ENCODE measurements at regions of chr16 and their contacts with region 1.

Region 1: DNA sequence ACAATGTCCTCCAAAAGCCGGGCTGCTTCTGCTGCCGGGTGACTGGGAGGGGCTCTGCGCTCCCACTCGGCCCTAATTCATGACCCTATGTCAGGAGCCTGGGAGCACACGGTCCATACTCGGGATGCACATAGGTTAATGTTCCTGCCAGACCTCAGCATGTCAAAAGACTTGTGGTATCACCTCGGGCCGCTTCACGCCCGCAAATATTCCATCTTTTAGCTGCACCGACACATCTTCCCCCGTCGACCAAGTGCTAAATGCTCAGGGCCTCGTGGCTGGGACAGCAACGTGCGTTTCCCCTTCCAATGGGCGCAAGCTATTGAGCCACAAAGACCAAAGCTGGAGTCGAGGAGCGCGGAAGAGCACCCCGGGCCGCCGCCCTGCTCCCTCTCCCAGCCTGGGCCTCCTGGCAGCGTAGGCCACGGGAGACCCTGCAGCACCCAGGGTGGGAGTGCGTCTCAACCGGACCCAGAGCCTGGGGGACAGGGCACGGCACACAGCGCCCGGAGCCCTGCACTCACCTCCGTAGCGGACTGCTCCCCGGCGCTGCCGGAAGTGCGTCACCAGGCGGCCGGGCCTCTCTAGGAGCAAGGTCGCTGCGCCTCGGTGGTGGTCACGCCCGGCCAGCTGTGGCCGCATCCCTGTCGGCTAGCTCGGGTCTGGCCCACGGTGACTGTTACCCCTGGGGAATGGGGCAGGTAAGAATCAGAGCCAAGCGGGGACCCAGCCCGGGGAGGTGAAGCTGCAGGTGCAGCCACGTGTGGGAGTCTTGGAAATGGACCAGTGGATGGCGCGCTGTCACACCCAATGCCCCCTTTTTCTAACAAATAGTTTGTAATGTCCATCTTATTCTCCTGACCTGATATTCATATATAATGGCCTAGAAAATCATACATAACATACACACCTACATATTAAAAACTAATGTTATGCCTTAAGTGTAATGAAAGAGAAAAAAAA is at the start of gene ZNF23:
- DNase-seq: peak; percentile 64
- ATAC-seq: peak; percentile 99
- H3K4me3 ChIP-seq: peak within 1 kb of the TSS; percentile 73 to 90 (median 89)
- H3K27ac ChIP-seq: peak within 1 kb of the TSS; percentile 64
- H3K4me1 ChIP-seq: peaks cover 25% of the 10 kb centered on the region
- H3K27me3 ChIP-seq: no peaks in the 10 kb centered on the region; a peak in 1 of 5 replicates
- CTCF ChIP-seq: peak; percentile 57
- EP300 ChIP-seq: 0 out of 4 replicates have a peak, but pooled peaks have one; percentile 24 to 56
- POLR2A ChIP-seq: peak; percentile 96 to 99
- RAD21 ChIP-seq: peak; percentile 71
- total RNA-seq, gene ZNF23: 12.2 and 14.0 TPM in 2 replicates

Region 2: GRCh38 chr16:71426072-71426879 is 35.7 kb before region 1 on chr16:
- CTCF ChIA-PET with region 1: no interaction called
- POLR2A ChIA-PET with region 1: interaction called, 13 read pairs
- in situ Hi-C with region 1: no loop called
- intact Hi-C with region 1: no loop called
- DNase-seq: peak; percentile 99
- ATAC-seq: peak; percentile 93
- H3K4me3 ChIP-seq: peak overlapping the region; percentile 57 to 80 (median 59)
- H3K27ac ChIP-seq: peak overlapping the region; percentile 41
- H3K4me1 ChIP-seq: peaks cover 30% of the 10 kb centered on the region
- H3K27me3 ChIP-seq: peaks cover 4 to 32% of the 10 kb centered on the region in 2 experiments
- CTCF ChIP-seq: peak; percentile 44
- EP300 ChIP-seq: peak; percentile 9 to 43; a peak in 1 of 4 replicates
- POLR2A ChIP-seq: no peak
- RAD21 ChIP-seq: no peak; the same call in 1 of the 2 replicates

Region 3: GRCh38 chr16:71484006-71484893 is 22.3 kb after region 1 on chr16:
- CTCF ChIA-PET with region 1: interaction called, 3 read pairs
- POLR2A ChIA-PET with region 1: interaction called, 58 read pairs
- in situ Hi-C with region 1: no loop called
- intact Hi-C with region 1: loop called (anchors 1 kb)
- DNase-seq: peak; percentile 91
- ATAC-seq: peak; percentile 93
- H3K4me3 ChIP-seq: peak overlapping the region; percentile 81 to 95 (median 88)
- H3K27ac ChIP-seq: peak overlapping the region; percentile 83
- H3K4me1 ChIP-seq: peaks cover 24% of the 10 kb centered on the region
- H3K27me3 ChIP-seq: peaks cover 0 to 4% of the 10 kb centered on the region in 2 experiments; a peak in 2 of 5 replicates
- CTCF ChIP-seq: no peak; the same call in 1 of the 2 replicates
- EP300 ChIP-seq: no peak
- POLR2A ChIP-seq: peak; percentile 85 to 86
- RAD21 ChIP-seq: peak; percentile 46; the same call in 1 of the 2 replicates

Region 4: GRCh38 chr16:72124761-72125634 is 663.0 kb after region 1 on chr16:
- CTCF ChIA-PET with region 1: no interaction called
- POLR2A ChIA-PET with region 1: no interaction called
- in situ Hi-C with region 1: no loop called
- intact Hi-C with region 1: no loop called
- DNase-seq: peak; percentile 67
- ATAC-seq: peak; percentile 90
- H3K4me3 ChIP-seq: 0 out of 6 replicates have a peak overlapping the region, but pooled peaks of 1 of the 3 experiments have one; percentile 6
- H3K27ac ChIP-seq: peak overlapping the region; percentile 53
- H3K4me1 ChIP-seq: peaks cover 26% of the 10 kb centered on the region
- H3K27me3 ChIP-seq: no peaks in the 10 kb centered on the region
- CTCF ChIP-seq: peak; percentile 95
- EP300 ChIP-seq: peak in 1 of 2 experiments; percentile 17; a peak in 1 of 4 replicates
- POLR2A ChIP-seq: no peak
- RAD21 ChIP-seq: peak; percentile 81

Region 5: GRCh38 chr16:72324578-72324977 is 862.6 kb after region 1 on chr16:
- CTCF ChIA-PET with region 1: no interaction called
- POLR2A ChIA-PET with region 1: no interaction called
- in situ Hi-C with region 1: no loop called
- intact Hi-C with region 1: no loop called
- DNase-seq: no peak
- ATAC-seq: no peak
- H3K4me3 ChIP-seq: no peak overlapping the region
- H3K27ac ChIP-seq: no peak overlapping the region
- H3K4me1 ChIP-seq: no peaks in the 10 kb centered on the region
- H3K27me3 ChIP-seq: no peaks in the 10 kb centered on the region
- CTCF ChIP-seq: no peak
- EP300 ChIP-seq: no peak
- POLR2A ChIP-seq: no peak
- RAD21 ChIP-seq: no peak